ENCODE measurements at regions of chr6 and their contacts with region 1.

Region 1: GRCh38 chr6:137799950-137800568 is 67.0 kb upstream of the TNFAIP3 start:
- DNase-seq: no peak
- H3K4me3 ChIP-seq: no peak overlapping the region
- H3K27ac ChIP-seq: no peak overlapping the region
- H3K27me3 ChIP-seq: no peaks in the 10 kb centered on the region
- CTCF ChIP-seq: peak; percentile 64

Region 2: DNA sequence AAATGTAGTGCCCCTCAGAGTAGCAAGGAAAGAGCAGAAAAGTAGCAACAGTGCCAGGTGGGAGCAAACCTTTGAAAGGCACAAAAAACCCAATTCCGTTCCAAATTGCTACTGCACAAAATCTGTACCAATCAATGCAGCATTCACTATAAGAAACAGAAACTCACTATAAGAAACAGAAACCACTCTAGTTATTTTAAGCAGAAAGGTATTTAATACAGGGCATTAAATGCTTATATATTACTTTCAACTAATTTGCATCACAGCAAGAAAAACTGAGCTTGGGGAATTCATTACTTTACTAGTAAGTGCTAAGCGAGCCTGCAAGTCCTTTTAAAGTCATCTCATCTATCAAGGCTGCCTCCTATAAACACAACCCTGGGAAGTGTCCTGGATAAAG is 189.4 kb before region 1 on chr6:
- CTCF ChIA-PET with region 1: no interaction called
- POLR2A ChIA-PET with region 1: no interaction called
- DNase-seq: no peak
- H3K4me3 ChIP-seq: no peak overlapping the region
- H3K27ac ChIP-seq: no peak overlapping the region
- H3K27me3 ChIP-seq: no peaks in the 10 kb centered on the region
- CTCF ChIP-seq: no peak

Region 3: DNA sequence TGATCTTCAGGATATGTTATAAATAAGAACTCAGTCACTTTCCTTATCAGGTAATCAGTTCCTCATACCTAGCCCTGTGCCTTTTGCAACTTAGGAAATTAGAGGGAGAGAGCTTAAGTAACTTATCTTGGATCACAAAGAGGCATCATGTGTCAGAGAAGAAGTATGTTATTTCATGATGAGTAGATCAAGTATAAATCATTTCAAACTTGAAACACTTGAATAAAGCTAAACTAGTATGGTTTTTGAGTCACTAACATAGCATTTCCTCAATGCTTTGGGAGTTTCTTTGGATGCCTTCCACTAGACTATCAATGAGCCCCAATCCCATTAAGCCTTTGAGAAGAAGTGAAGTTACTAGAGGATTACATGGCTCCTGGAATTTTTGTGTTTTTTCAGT is 35.6 kb before region 1 on chr6:
- CTCF ChIA-PET with region 1: no interaction called
- POLR2A ChIA-PET with region 1: no interaction called
- DNase-seq: no peak
- H3K4me3 ChIP-seq: no peak overlapping the region
- H3K27ac ChIP-seq: no peak overlapping the region
- H3K27me3 ChIP-seq: no peaks in the 10 kb centered on the region
- CTCF ChIP-seq: no peak

Region 4: GRCh38 chr6:137811121-137811915 is 11.3 kb after region 1 on chr6:
- CTCF ChIA-PET with region 1: interaction called, 27 read pairs
- POLR2A ChIA-PET with region 1: no interaction called
- DNase-seq: peak; percentile 43
- H3K4me3 ChIP-seq: no peak overlapping the region
- H3K27ac ChIP-seq: peak overlapping the region; percentile 31
- H3K27me3 ChIP-seq: no peaks in the 10 kb centered on the region
- CTCF ChIP-seq: no peak

Measured in AG04450 (cell line).